Right lobe of liver (tissue), 6 donors: ENCODE measurements at regions of chr17 and their contacts with region 1.

Region 1: DNA sequence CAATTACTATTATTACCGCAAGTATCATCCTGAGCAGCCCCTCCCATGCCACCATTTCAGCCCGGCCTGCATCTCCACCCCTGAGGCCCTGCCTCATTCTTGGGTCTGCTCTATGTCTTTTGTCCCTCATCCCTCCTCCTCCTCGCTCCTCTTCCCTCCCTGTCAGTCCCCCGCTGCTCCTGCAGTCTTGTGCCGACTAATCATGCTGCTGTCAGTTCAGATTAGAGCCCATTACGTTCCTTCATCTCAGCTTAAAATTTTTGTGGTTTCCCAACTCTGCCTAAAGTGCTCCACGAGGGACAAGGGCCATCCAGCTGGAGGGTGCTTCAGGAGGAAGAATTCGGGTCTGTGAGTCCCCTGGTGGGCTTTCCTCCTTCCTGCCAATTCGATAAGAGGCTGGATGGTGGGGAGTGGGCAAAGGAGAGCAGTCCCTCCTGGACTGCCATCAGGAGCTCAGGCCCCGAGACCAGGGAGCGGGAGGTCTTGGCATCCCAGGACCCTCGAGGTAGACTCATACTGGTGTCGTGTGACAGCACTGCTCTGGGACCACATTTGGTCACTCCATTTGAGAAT is 32.9 kb upstream of the GOSR2 start:
- DNase-seq: no peak
- ATAC-seq: no peak
- H3K4me3 ChIP-seq: no peak overlapping the region
- H3K27ac ChIP-seq: no peak overlapping the region
- H3K4me1 ChIP-seq: no peaks in the 10 kb centered on the region
- H3K27me3 ChIP-seq: no peaks in the 10 kb centered on the region
- CTCF ChIP-seq: no peak
- POLR2A ChIP-seq: no peak

Region 2: GRCh38 chr17:46809110-46809571 is 80.9 kb before region 1 on chr17:
- intact Hi-C with region 1: no loop called
- DNase-seq: no peak
- ATAC-seq: no peak
- H3K4me3 ChIP-seq: no peak overlapping the region
- H3K27ac ChIP-seq: no peak overlapping the region
- H3K4me1 ChIP-seq: no peaks in the 10 kb centered on the region
- H3K27me3 ChIP-seq: no peaks in the 10 kb centered on the region
- CTCF ChIP-seq: no peak
- POLR2A ChIP-seq: no peak

Region 3: DNA sequence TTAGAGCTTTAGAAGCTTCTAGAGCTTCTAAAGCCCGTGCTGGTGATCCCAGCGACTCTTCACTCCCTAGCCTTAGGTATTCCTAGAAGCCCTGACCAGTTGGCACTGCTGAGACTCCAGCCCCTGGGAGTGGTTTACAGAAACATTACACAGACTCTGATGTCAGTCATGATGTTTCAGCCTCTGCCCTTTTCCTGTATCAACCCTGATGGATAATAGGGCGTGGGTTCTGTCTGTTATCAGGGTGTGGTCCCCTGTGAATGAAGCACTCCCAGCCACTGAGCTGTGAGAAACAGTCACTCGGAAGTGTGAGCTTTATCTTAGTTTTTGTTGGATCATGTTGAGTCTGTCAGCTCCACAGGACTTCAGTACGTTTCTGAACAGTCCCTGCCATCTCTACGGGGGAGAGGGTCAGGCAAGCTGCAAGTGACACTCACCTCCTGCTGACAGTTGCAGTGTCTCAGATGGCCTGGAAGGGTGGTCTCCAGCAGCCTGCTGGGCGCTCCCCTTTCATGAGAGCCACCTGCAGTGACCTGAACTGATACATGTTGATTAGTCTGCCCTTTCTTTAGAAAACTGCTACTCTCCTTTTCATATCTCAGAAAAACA is 45.7 kb after region 1 on chr17:
- intact Hi-C with region 1: loop called in 1 of 2 experiments (anchors 10 kb)
- DNase-seq: no peak
- ATAC-seq: peak in 1 of 4 donors; percentile 8
- H3K4me3 ChIP-seq: no peak overlapping the region
- H3K27ac ChIP-seq: no peak overlapping the region
- H3K4me1 ChIP-seq: no peaks in the 10 kb centered on the region
- H3K27me3 ChIP-seq: no peaks in the 10 kb centered on the region
- CTCF ChIP-seq: no peak
- POLR2A ChIP-seq: no peak